Psoas muscle (tissue), 8 donors: ENCODE measurements at regions of chr12 and their contacts with region 1.

Region 1: GRCh38 chr12:56041552-56042429 is at the start of gene RPS26:
- DNase-seq: peak; percentile 96 to 99
- ATAC-seq: peak; percentile 94 to 96 (median 96)
- H3K4me3 ChIP-seq: peak within 1 kb of the TSS; percentile 93
- H3K27ac ChIP-seq: peak within 1 kb of the TSS; percentile 99
- H3K4me1 ChIP-seq: peaks cover 17% of the 10 kb centered on the region
- H3K27me3 ChIP-seq: no peaks in the 10 kb centered on the region
- CTCF ChIP-seq: peak; percentile 43
- total RNA-seq, gene RPS26: 16.6 to 49.8 (median 23.6) TPM

Region 2: GRCh38 chr12:55940065-55940732 is 101.6 kb before region 1 on chr12:
- intact Hi-C with region 1: no loop called
- DNase-seq: peak; percentile 82 to 88
- ATAC-seq: peak; percentile 97 to 99 (median 98)
- H3K4me3 ChIP-seq: peak overlapping the region; percentile 42
- H3K27ac ChIP-seq: no peak overlapping the region
- H3K4me1 ChIP-seq: no peaks in the 10 kb centered on the region
- H3K27me3 ChIP-seq: peaks cover 0 to 5% (median 0%) of the 10 kb centered on the region in 3 donors
- CTCF ChIP-seq: peak; percentile 83

Region 3: DNA sequence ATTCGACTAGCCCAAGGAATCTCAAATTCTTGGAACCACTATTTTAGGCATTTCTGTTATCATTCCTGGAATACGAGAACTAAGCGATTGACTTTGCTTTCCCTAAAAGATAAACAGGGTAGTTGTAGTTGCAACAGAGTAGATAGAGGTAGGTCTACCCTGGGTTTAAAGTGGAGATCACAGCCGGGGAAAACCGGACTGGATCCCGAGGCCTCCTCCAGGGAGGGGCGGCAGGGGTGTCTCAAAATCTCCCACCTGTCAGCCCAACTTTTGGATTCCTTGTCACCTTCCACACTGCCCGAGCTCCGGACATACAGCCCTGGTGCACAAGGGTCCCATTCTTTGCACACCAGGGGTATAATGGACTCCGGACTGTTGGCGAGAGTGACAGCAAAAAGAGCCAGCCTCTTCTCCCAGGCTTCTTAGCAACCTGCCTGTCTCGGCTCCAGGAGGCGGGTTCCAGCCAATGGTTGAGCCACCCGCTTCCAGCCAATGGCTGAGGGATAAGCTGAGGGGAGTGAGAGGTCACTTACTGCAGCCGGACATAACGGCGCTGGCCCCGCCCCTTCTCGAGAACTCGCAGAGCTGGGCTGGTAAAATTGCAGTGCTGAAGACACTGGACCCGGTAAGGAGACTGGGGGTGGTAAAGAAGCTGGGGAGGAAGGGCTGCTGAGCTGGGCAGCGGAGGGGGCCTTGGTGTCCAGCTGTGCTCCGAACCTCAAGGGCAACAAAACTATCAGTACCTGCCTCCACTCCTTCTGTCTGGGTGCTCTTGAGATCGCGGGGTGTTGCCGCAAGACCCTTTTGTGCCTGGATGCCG is 44.9 kb before region 1 on chr12 and contains the start of gene SUOX:
- intact Hi-C with region 1: loop called (anchors 2 to 5 kb)
- DNase-seq: peak; percentile 96 to 98
- ATAC-seq: peak; percentile 98 to 99 (median 98)
- H3K4me3 ChIP-seq: peak within 1 kb of the TSS; percentile 68
- H3K27ac ChIP-seq: peak within 1 kb of the TSS; percentile 84
- H3K4me1 ChIP-seq: peaks cover 17% of the 10 kb centered on the region
- H3K27me3 ChIP-seq: no peaks in the 10 kb centered on the region
- CTCF ChIP-seq: no peak
- total RNA-seq, gene SUOX: 12.1 to 24.6 (median 15.6) TPM